HEK293 (cell line): ENCODE measurements at regions of chr11 and their contacts with region 1.

Region 1: DNA sequence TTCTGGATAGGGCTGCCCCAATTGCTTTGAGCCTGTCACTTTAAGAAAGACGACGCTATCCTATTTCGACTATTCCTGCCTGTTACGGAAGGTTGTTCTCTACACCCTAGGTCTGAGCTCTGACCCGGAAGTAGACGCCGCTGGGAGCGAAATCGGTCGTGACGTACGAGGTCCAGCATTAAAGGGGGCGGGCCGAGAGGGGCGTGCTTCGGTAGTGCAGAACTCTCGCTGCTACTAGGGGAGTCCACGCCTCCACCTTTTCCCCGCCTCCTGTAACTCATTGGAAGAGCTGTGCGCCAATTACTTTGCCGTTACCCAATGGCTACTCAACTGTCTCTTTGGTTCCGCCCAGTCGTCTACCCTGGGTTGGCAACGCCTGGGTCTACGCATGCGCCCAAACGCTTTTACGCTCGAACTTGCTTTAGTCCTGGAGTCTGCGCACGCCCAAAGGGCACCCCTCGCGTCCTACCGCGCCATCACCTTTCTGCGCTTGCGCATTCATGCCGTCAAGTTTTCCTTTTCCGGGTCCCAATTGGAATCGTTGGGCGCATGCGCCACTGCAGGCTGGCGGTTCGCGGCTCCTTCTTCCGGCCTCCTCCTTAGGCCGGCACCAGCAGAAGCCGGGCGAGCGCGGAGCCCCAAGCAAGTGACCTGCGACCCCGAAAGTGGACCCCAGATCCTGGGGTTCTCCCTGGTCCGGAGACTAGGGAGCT is at the start of gene PCNX3:
- H3K4me3 ChIP-seq: peak within 1 kb of the TSS; percentile 91
- H3K27ac ChIP-seq: peak within 1 kb of the TSS; percentile 79
- H3K4me1 ChIP-seq: no peaks in the 10 kb centered on the region
- CTCF ChIP-seq: no peak

Region 2: GRCh38 chr11:65569973-65570918 is 45.1 kb before region 1 on chr11 and contains the start of gene ZNRD2:
- CTCF ChIA-PET with region 1: interaction called, 4 read pairs
- POLR2A ChIA-PET with region 1: interaction called, 20 read pairs
- H3K4me3 ChIP-seq: peak within 1 kb of the TSS; percentile 74
- H3K27ac ChIP-seq: peak within 1 kb of the TSS; percentile 93
- H3K4me1 ChIP-seq: peaks cover 16% of the 10 kb centered on the region; the same call in 1 of the 2 replicates
- CTCF ChIP-seq: peak; percentile 92

Region 3: DNA sequence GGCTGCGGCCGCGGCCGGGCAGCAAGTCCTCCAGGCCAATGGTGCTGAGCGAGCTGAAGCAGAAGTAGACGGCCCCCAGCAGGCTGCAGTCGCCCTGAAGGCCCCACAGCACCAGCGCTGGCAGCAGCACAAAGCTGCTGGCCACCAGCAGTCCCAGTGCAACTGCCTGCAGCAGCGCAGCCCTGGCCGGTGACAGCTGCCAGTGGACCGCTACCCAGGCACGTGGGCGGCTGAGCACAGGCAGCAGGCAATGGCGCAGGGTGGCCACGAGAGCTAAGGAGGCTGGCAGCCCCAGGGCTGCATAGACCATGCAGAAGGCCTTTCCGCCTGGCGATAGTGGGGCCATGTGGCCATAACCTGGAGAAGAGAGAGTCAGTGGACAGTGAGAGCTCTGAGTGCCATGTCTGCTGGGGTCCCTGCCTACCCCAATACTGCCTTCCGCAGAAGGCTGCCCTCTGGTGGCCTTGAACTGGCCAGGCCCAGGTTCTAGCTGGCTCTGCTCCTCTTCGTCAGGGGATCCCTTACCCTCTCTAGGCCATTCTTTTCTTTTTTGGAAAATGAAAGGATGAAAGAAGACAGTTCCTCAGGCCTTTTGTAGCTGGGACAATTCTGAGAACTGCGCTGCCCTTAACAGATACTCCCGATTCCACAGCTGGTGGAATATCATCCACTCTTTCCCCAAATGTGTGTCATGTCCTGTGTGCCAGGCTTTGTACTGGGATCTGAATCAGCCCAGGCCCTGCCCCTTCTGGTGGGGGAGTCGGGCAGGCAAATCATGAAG is 21.7 kb before region 1 on chr11:
- CTCF ChIA-PET with region 1: interaction called, 22 read pairs
- POLR2A ChIA-PET with region 1: interaction called, 9 read pairs
- H3K4me3 ChIP-seq: no peak overlapping the region
- H3K27ac ChIP-seq: no peak overlapping the region
- H3K4me1 ChIP-seq: no peaks in the 10 kb centered on the region
- CTCF ChIP-seq: peak; percentile 68

Region 4: DNA sequence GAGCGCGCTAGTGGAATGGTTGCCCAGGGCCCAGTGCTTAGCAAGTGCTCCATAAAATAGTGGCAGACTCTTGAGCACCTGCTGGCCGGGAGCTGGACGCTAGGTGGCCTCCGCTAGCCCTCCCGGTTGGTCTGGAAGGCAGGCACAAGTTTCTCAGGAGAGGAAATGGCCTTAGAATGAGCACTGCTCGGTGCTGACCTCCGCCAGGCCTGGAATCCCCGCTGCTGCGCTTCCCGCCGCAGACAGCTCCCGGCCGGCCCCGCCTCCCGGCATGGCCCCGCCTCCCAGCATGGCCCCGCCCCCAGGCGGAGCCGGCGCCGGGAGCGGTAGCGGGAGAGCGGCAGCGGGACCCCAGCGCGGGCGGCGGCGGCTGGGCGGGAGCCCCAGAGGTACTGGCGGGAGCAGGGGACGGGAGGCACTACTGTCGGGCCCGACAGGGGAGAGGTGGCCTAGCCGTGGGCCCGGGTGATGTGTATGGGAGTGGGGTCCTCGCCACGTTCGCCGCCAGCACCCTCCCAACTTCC is 22.5 kb after region 1 on chr11 and contains the start of gene SIPA1:
- CTCF ChIA-PET with region 1: no interaction called
- POLR2A ChIA-PET with region 1: interaction called, 19 read pairs
- H3K4me3 ChIP-seq: peak within 1 kb of the TSS; percentile 69
- H3K27ac ChIP-seq: peak within 1 kb of the TSS; percentile 61; the same call in 1 of the 2 replicates
- H3K4me1 ChIP-seq: no peaks in the 10 kb centered on the region
- CTCF ChIP-seq: peak; percentile 9; the same call in 1 of the 2 replicates

Region 5: DNA sequence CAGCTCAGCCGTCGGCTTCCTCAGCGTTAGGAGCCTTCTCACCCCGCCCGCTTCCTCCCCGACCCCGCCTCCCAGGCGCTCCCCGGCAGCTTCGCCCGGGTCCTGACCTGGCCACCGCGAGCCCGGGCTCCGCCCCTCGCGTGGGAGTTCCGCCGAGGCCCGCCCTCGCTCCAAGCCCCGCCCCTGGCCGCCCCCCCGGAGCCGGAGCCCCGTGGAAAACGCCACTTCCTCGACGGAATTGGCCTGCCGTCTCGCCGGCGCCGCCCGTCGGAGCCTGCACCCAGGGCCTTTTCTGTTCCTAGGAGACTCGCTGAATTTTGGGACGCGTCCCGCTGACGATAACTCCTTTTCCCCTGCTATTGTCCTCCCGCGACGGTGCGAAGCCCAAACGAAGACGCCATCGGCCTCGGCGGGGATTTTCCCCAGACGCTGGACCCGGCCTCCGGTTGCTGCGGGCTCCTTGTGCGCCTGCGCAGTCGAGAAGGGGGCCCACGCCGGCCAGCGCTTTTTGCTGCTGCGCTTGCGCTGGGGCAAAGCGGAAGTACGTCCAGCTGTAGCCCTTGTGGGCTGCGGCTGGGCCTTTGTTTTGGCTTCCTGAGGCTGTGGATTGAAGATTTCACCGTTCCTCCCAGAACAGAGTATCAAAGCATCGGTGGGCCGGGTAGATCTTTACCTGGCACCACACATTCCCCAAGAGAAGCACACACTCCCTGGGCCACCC is 37.3 kb after region 1 on chr11:
- CTCF ChIA-PET with region 1: interaction called, 3 read pairs
- POLR2A ChIA-PET with region 1: interaction called, 13 read pairs
- H3K4me3 ChIP-seq: peak overlapping the region; percentile 46
- H3K27ac ChIP-seq: peak overlapping the region; percentile 54
- H3K4me1 ChIP-seq: peaks cover 8% of the 10 kb centered on the region
- CTCF ChIP-seq: no peak

Region 6: GRCh38 chr11:65662799-65663638 is 47.6 kb after region 1 on chr11 and contains the start of gene RELA:
- CTCF ChIA-PET with region 1: no interaction called
- POLR2A ChIA-PET with region 1: interaction called, 10 read pairs
- H3K4me3 ChIP-seq: peak within 1 kb of the TSS; percentile 82
- H3K27ac ChIP-seq: peak within 1 kb of the TSS; percentile 93
- H3K4me1 ChIP-seq: no peaks in the 10 kb centered on the region
- CTCF ChIP-seq: no peak

Region 7: DNA sequence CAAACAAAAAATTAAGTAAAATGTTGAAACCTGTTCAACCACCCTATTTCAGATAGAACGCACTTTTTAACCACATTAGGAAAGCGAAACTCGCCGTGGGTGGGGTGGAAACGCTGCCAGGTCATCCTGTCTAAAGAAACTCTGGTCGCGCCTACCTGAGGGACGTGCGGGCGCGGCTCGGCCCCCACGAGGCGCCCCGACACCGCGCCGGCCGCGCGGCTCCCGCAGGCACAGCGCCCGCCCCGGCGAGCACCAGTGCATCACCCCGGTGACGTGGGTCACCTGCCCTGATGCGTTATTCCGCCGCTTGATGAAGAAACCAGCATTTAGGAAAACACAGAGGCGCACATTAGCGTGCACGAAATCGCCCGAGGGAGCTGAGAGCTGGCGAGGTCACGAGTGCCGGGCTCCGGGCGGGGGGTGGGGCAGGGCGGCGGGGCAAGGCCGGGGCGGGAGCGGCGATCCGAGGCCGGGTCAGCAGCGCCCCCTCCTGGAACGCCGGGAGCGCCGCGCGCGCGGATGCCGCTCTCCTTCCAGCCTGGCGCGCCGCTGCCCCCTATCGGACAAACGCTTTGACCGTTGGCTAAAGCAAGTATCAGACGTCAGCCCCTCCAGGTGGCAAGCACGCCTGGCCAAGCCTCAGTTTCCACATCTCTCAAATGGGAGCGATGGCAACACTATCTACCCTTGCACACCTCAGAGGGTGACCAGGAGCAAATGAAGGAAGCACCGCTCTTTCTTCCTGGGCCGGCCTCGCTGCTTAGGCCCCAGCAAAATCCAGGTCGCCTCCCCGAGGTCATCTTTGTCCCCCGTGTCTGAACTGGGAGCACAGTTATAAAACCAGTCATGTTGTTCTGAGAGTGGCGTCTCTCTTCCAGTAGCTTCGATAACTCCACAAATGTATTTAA is 202.7 kb after region 1 on chr11:
- CTCF ChIA-PET with region 1: no interaction called
- POLR2A ChIA-PET with region 1: no interaction called
- H3K4me3 ChIP-seq: peak overlapping the region; percentile 66
- H3K27ac ChIP-seq: peak overlapping the region; percentile 45; the same call in 1 of the 2 replicates
- H3K4me1 ChIP-seq: no peaks in the 10 kb centered on the region; the same call in 1 of the 2 replicates
- CTCF ChIP-seq: peak; percentile 92

Region 8: DNA sequence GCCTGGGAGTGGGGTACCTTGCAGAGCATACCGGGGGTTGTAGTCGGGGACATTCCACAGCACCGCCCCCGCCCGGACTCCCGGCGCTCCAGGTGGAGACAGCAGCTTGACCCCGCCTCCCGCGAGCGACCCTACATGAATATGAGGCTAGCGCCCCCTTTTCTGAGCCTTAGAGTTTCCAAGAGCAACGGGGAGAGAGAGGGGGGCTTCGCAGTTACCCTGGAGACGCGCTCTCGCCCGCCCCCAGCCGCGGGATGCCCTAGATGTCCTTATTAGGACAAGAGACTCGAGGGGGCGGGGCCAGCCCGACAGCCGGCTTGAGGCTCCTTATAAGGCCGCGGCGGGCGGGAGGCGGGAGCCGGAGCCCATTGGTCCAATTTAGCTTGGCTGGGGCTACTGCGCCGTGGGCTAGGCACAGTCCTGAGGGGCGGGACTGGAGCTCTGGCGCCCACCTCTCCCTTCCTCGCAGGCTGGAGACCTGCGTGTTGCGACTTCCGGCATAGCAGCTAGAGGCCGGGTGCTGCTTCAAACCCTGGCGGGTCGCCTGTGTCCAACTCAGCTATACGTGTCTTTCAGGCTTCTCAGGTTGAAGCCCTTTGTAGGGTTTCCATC is 243.9 kb after region 1 on chr11:
- CTCF ChIA-PET with region 1: interaction called, 4 read pairs
- POLR2A ChIA-PET with region 1: interaction called, 20 read pairs
- H3K4me3 ChIP-seq: peak overlapping the region; percentile 94
- H3K27ac ChIP-seq: peak overlapping the region; percentile 92
- H3K4me1 ChIP-seq: peaks cover 4% of the 10 kb centered on the region; the same call in 1 of the 2 replicates
- CTCF ChIP-seq: peak; percentile 69; the same call in 1 of the 2 replicates